ENCODE measurements at regions of chr15 and their contacts with region 1.

Region 1: DNA sequence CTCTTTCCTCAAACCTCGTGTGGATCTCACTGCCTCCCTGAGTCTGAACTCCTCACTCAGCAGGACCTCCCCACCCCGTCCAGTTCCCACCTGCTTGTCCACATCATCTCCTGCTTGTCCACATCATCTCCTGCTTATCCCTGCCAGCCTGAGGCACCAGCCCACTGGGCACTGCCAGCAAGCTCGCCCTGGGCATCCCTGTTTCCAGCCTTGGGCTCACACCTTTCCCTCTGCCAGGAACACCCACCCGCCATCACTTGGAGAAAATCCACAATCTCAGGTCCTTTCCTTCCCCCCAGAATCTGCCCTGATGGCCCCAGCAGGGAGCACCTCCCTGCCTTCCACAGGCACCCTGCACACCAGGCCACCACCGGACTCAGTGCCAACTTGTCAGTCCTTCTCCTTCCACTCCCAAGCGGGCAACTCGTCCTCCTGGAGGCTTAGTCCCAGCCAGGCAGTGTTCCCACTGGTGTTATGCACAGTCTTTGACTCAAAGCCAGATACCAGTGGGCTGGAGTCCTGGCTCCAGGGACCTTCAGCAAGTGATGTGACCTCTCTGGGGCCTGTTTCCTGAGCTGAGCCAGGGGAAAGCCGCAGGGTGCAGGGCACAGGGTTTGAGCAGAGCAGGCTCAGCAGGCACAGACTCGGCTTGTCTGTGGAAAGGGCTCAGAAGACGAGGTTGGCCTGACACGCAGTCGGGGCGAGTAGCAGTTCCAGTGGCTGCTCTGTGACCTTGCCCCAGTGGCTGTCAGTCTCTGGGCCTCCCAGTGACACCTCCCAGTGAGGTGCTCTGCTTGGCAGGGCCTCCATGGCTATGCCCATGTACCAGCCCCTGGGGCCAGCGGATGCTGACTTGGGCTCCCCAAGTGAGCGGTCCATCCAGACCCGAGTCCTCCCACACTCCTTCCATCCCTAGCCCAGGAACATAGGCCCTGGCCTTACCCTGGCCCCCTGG is 9.5 kb upstream of the MESP2 start:
- DNase-seq: no peak
- H3K4me3 ChIP-seq: no peak overlapping the region
- H3K27ac ChIP-seq: peak overlapping the region; percentile 86
- H3K4me1 ChIP-seq: peaks cover 77% of the 10 kb centered on the region
- H3K27me3 ChIP-seq: no peaks in the 10 kb centered on the region
- CTCF ChIP-seq: no peak

Region 2: DNA sequence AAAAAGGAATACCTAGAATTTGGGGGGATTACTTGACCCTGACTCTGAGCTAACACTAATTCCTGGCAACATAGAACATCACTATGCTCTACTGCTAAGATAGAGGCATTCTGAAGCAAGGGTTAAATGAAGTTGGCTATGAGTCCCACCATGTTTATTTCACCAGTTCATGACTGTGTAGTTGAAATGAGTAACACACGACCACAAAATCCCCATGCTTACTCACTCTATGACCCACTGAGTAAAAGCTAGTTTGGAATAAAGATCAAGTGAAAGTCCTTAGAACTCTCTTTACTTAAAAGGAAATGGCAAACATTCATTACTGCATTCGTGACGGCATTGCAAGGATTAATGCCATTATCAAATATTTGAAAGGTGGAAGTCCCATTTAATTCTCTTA is 1346.8 kb before region 1 on chr15:
- CTCF ChIA-PET with region 1: no interaction called
- POLR2A ChIA-PET with region 1: no interaction called
- intact Hi-C with region 1: no loop called
- DNase-seq: no peak
- H3K4me3 ChIP-seq: no peak overlapping the region
- H3K27ac ChIP-seq: no peak overlapping the region
- H3K4me1 ChIP-seq: no peaks in the 10 kb centered on the region
- H3K27me3 ChIP-seq: peaks cover 8% of the 10 kb centered on the region
- CTCF ChIP-seq: no peak

Region 3: DNA sequence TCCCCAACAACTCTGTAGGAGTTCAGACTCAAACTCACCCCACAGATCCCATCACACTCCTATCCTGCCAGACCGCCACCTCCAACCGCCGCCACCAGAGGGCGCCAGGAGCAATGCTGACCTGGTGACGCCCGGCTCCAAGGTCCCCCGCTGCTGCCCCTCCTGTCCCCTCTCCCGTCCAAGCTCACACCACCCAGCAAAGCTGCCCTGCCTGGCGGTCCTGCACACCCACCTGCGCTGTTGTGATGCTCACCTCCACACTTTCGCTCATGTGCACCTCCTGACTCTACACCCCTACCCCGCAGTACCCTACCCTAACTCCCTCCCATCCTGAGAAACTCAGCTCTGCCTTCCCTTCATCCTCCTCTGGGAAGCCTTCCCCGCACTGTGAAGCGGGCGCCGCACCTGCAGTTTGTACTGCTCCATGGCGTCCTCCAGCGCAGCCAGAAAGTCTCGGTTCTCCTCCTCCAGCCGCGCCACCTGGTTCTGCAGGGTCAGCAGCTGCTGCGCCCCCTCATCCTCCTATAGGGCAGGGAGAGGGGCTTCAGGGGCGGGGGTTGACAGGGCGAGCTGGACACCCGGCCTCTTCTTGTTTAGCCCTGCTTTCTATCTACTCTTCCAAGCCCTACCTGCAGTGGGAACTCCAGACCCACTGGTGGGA is 119.3 kb before region 1 on chr15:
- CTCF ChIA-PET with region 1: no interaction called
- POLR2A ChIA-PET with region 1: no interaction called
- intact Hi-C with region 1: no loop called
- DNase-seq: peak in 1 of 2 experiments; percentile 73
- H3K4me3 ChIP-seq: no peak overlapping the region
- H3K27ac ChIP-seq: no peak overlapping the region
- H3K4me1 ChIP-seq: no peaks in the 10 kb centered on the region
- H3K27me3 ChIP-seq: no peaks in the 10 kb centered on the region
- CTCF ChIP-seq: peak; percentile 89

Region 4: DNA sequence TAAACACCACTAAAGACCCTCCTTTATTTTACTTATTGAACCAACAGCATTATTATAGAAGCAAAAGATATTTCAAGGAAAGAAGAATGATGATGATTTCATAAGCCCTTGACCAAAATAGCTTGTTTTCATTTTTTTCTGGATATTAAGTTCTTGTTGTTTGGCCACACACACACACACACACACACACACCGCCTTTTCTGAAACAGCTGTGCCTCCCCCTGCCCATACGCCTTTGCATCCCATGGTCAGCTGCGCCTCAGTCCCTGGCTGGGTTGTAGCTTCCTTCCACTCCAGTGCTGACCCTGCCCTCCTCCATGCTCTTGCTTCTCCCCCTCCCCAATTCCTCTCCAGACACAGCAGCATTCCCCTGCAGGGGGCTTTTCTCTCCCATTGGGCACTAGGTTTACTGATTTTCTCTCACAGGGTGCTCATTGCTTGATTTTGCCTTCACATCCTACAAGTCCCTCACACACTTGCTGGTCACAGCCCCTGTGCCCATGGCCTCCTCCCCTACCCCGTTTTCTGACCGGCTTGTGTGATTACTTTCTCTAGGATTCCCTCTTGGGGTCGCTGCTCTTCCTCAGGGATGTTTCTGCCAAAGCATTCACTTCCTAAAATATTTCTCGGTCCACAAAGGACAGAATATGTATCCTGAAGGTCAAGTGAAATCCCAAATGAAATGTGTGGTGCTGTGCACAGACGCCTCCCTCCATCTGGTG is 34.0 kb before region 1 on chr15:
- CTCF ChIA-PET with region 1: no interaction called
- POLR2A ChIA-PET with region 1: no interaction called
- intact Hi-C with region 1: no loop called
- DNase-seq: no peak
- H3K4me3 ChIP-seq: no peak overlapping the region
- H3K27ac ChIP-seq: no peak overlapping the region
- H3K4me1 ChIP-seq: no peaks in the 10 kb centered on the region
- H3K27me3 ChIP-seq: no peaks in the 10 kb centered on the region
- CTCF ChIP-seq: no peak

Region 5: GRCh38 chr15:89851673-89852341 is 85.2 kb after region 1 on chr15:
- CTCF ChIA-PET with region 1: no interaction called
- POLR2A ChIA-PET with region 1: interaction called, 14 read pairs
- intact Hi-C with region 1: no loop called
- DNase-seq: no peak
- H3K4me3 ChIP-seq: no peak overlapping the region
- H3K27ac ChIP-seq: no peak overlapping the region
- H3K4me1 ChIP-seq: peaks cover 28% of the 10 kb centered on the region
- H3K27me3 ChIP-seq: no peaks in the 10 kb centered on the region
- CTCF ChIP-seq: no peak

Region 6: DNA sequence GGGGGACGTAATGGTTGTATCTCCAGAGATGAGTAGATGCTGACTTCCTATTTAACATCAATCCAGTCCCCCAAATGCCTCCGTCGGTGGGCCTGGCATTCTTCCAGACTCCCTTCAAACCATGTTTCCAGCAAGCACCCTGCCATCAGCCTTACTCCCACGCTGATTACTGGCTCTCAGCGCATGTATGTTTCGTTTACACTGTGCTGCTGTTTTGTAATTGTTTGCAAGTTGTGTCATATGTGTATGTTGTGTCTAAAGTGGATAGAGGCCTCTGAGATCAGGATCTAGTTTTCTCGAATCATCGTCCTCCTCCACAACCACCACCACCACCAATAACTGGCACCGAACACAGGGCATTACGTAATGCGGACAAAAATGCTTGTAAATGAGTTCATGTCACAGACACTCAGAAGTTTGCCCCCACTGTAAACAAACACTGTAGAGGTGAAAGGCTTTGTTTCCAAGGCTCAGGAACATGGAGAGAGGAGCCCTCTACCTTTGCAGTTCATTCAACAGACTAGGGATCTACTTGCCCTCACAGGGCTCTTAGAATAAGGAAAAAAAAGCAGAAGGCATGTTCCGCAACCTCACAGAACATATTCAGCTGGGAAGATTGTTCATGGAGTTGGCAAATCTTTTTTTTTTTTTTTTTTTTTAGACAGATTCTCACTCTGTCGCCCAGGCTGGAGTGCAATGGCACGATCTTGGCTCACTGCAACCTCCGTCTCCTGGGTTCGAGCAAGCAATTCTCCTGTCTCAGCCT is 388.4 kb after region 1 on chr15:
- CTCF ChIA-PET with region 1: no interaction called
- POLR2A ChIA-PET with region 1: no interaction called
- intact Hi-C with region 1: no loop called
- DNase-seq: peak in 1 of 2 experiments; percentile 81
- H3K4me3 ChIP-seq: no peak overlapping the region
- H3K27ac ChIP-seq: no peak overlapping the region
- H3K4me1 ChIP-seq: peaks cover 48% of the 10 kb centered on the region
- H3K27me3 ChIP-seq: no peaks in the 10 kb centered on the region
- CTCF ChIP-seq: no peak

Measured in PC-9 (cell line).